MCF 10A (cell line): ENCODE measurements at regions of chr19 and their contacts with region 1.

Region 1: DNA sequence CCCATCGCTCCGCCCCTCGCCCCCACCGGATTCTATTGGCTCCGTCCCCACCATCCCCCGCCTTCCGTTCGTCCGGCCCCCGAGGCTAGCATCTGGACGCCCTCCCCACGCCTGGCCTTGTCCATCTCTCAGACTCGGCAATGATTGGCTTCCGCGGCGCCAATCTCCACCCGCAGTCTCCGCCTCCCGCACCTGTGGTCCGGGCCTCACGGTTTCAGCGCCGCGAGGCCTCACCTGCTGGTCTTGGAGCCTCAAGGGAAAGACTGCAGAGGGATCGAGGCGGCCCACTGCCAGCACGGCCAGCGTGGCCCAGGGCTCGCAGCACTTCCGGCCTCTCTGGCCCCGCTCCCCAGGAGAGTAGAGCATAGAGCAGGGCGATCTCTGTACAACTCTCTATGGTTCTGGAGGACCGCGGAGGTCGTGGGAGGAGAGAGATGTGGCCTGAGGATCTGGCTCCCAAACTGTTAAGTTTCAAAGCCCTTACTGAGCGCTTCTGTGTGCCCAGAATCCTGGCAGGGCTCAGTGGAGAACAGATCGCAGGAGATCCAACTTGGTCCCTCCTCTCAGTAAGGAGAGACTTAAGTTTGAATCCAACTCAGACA is at the start of gene ERCC1:
- DNase-seq: peak; percentile 100
- H3K4me3 Mint-ChIP-seq: peak within 1 kb of the TSS; percentile 97
- H3K27ac Mint-ChIP-seq: peak within 1 kb of the TSS; percentile 100
- H3K4me1 Mint-ChIP-seq: peaks cover 34% of the 10 kb centered on the region
- H3K27me3 Mint-ChIP-seq: no peaks in the 10 kb centered on the region
- CTCF ChIP-seq: no peak
- total RNA-seq, gene ERCC1: 186 and 227 TPM in 2 replicates

Region 2: DNA sequence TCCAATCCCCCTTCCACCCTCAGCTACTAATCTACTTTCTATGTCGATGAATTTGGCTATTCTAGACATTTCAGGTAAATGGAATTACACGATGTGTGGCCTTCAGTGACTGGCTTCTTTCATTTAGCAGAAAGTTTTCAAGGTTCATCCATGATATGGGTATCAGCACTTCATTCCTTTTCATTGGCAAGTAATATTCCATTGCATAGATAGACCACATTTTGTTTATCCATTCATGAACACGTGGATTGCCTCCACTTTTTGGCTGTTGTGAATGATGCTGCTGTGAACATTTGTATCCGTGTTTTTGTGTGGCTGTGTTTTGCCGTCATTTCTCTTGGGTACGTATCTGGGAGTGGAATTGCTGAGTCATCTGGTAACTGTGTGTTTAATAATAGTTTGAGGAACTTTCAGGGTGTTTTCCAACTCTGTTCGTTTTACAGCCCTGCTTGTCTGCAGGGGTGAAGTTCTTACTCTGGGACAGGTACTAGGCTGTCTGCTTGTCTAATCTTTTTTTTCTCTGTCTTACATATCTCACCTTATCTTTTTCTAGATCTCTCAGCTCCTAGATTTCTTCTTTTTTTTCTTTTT is 140.2 kb before region 1 on chr19:
- CTCF ChIA-PET with region 1: no interaction called
- POLR2A ChIA-PET with region 1: no interaction called
- intact Hi-C with region 1: no loop called
- DNase-seq: peak; percentile 13
- H3K4me3 Mint-ChIP-seq: no peak overlapping the region
- H3K27ac Mint-ChIP-seq: peak overlapping the region; percentile 91
- H3K4me1 Mint-ChIP-seq: peaks cover 7% of the 10 kb centered on the region
- H3K27me3 Mint-ChIP-seq: no peaks in the 10 kb centered on the region
- CTCF ChIP-seq: no peak

Region 3: DNA sequence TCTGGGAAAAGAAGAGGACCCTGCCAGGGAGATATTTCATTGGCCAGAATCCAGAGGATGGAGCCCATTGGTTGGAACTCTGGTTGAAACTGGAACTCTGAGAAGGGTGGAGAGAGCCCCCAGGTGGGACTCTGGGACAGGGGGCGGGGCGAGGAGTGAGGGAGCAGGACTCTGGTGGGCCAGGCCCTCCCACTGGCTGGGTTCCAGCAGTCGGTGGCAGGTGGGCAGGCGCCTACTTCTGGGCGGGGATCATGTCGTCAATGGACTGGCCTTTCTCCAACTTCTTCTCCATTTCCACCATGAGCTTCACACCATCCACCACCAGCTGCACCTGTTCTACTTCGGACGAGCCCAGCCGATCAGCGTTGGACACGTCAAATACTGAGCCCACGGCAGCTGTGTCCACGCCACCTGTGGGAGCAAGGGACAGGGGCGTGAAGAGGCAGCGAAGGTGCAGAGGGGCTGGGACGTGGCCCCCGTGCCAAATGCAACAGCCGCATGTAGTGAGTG is 117.1 kb before region 1 on chr19:
- CTCF ChIA-PET with region 1: no interaction called
- POLR2A ChIA-PET with region 1: no interaction called
- intact Hi-C with region 1: no loop called
- DNase-seq: no peak
- H3K4me3 Mint-ChIP-seq: no peak overlapping the region
- H3K27ac Mint-ChIP-seq: no peak overlapping the region
- H3K4me1 Mint-ChIP-seq: peaks cover 12% of the 10 kb centered on the region
- H3K27me3 Mint-ChIP-seq: no peaks in the 10 kb centered on the region
- CTCF ChIP-seq: no peak

Region 4: GRCh38 chr19:45413497-45413896 is 10.2 kb before region 1 on chr19:
- CTCF ChIA-PET with region 1: interaction called, 3 read pairs
- POLR2A ChIA-PET with region 1: interaction called, 11 read pairs
- intact Hi-C with region 1: no loop called
- DNase-seq: no peak
- H3K4me3 Mint-ChIP-seq: no peak overlapping the region
- H3K27ac Mint-ChIP-seq: no peak overlapping the region
- H3K4me1 Mint-ChIP-seq: peaks cover 14% of the 10 kb centered on the region
- H3K27me3 Mint-ChIP-seq: no peaks in the 10 kb centered on the region
- CTCF ChIP-seq: no peak

Region 5: DNA sequence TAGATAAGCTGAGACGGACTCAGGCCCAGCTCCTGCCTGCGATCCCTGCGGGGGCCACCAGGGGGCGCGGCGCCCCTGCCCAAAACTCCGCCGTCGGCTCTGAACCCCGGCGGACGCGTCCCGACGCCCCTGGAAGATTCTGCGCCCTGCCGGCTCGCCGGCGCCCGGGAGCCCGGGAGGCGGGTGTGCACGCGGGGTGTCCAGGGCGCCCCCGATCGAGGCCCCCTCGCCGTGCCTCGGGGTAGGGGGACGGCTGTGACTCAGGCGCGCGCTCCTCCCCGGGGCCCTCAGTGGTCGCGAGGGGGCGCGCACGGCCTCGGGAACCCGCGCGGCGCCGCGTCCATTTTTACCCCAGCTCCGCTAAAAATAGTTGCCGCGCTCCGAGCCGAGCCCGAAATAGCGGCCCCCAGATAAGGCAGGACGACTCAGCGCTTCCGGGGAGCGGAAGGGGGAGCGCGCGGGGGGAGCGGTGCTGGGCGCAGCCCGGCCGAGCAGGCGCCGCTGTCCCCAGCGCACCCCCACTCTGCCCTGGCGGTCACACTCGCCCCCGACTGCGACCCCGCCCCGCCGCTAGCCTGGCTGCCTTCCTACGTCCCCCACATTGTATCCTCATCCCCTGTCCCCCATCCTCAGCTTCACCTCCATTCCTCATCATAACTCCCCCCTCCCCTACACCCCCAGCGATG is 16.0 kb after region 1 on chr19:
- CTCF ChIA-PET with region 1: interaction called, 7 read pairs
- POLR2A ChIA-PET with region 1: interaction called, 11 read pairs
- intact Hi-C with region 1: no loop called
- DNase-seq: peak; percentile 73
- H3K4me3 Mint-ChIP-seq: peak overlapping the region; percentile 64
- H3K27ac Mint-ChIP-seq: no peak overlapping the region
- H3K4me1 Mint-ChIP-seq: peaks cover 17% of the 10 kb centered on the region
- H3K27me3 Mint-ChIP-seq: no peaks in the 10 kb centered on the region
- CTCF ChIP-seq: peak; percentile 98

Region 6: DNA sequence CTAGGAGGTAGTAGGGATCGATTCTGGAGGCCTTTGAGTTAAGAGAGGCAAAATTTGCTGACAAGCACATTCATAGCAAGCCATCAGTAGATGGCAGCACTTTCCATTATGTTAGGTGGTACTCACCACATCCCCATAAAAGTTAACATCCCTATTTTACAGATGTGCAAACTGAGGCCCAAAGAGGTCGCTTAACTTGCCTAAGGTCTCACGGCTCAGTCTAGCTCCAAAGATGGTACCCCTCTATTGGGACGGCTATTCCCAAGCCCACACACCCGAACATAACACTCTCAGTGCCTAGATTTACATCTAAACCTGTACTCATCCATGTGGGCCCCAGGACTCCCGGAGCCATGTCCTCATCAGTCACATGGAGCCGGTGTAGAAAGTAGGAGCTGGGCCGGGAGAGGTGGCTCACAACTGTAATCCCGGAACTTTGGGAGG is 22.7 kb after region 1 on chr19:
- CTCF ChIA-PET with region 1: interaction called, 3 read pairs
- POLR2A ChIA-PET with region 1: interaction called, 13 read pairs
- intact Hi-C with region 1: no loop called
- DNase-seq: peak; percentile 60
- H3K4me3 Mint-ChIP-seq: no peak overlapping the region
- H3K27ac Mint-ChIP-seq: peak overlapping the region; percentile 100
- H3K4me1 Mint-ChIP-seq: peaks cover 52% of the 10 kb centered on the region
- H3K27me3 Mint-ChIP-seq: no peaks in the 10 kb centered on the region
- CTCF ChIP-seq: peak; percentile 31

Region 7: DNA sequence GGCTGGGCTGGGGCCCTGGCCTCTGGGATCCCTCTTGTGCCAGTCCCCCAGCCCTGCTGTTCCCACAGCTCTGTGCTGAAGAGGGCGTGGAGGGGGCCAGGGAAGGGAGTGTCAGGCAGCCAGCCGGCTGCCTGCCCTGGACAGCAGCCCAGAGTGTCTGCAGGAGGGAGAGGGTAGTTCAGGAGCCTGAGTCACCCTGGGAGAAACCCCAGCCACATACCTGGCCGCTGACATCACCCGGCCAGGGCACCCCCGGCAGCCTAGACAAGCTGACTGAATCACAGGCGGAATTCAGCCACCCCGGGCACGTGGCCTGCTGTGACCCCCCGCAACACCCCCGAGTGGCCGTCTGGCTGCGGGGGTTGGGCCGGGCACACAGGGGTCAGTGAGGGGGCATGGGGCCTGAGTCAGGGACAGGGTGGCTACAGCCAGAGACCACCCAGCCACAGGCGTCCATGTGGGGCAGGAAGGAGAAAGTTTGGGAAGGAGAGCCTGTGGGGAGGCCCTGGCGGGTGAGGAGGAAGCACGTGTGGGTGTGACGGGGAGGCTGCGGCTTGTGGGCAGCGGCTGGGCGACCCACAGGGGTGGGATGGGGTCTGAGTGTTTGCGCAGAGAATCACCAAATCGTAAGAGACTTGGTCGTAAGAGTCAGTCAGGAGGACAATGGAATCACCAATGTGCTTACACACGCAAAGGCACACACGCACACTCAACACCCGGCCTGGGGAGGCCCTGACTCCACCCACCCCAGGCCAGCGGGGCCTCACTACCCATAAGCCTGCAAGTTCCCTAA is 32.2 kb after region 1 on chr19:
- CTCF ChIA-PET with region 1: no interaction called
- POLR2A ChIA-PET with region 1: interaction called, 12 read pairs
- intact Hi-C with region 1: no loop called
- DNase-seq: peak; percentile 98
- H3K4me3 Mint-ChIP-seq: peak overlapping the region; percentile 59
- H3K27ac Mint-ChIP-seq: peak overlapping the region; percentile 99
- H3K4me1 Mint-ChIP-seq: peaks cover 35% of the 10 kb centered on the region
- H3K27me3 Mint-ChIP-seq: no peaks in the 10 kb centered on the region
- CTCF ChIP-seq: no peak

Region 8: GRCh38 chr19:45469132-45469944 is 45.6 kb after region 1 on chr19:
- CTCF ChIA-PET with region 1: interaction called, 386 read pairs
- POLR2A ChIA-PET with region 1: interaction called, 20 read pairs
- intact Hi-C with region 1: no loop called
- DNase-seq: peak; percentile 97
- H3K4me3 Mint-ChIP-seq: peak overlapping the region; percentile 82
- H3K27ac Mint-ChIP-seq: peak overlapping the region; percentile 97
- H3K4me1 Mint-ChIP-seq: no peaks in the 10 kb centered on the region
- H3K27me3 Mint-ChIP-seq: no peaks in the 10 kb centered on the region
- CTCF ChIP-seq: no peak

Region 9: GRCh38 chr19:45478454-45479238 is 55.0 kb after region 1 on chr19:
- CTCF ChIA-PET with region 1: interaction called, 386 read pairs
- POLR2A ChIA-PET with region 1: interaction called, 16 read pairs
- intact Hi-C with region 1: loop called (anchors 1 kb)
- DNase-seq: peak; percentile 95
- H3K4me3 Mint-ChIP-seq: peak overlapping the region; percentile 76
- H3K27ac Mint-ChIP-seq: peak overlapping the region; percentile 99
- H3K4me1 Mint-ChIP-seq: peaks cover 14% of the 10 kb centered on the region
- H3K27me3 Mint-ChIP-seq: no peaks in the 10 kb centered on the region
- CTCF ChIP-seq: peak; percentile 97